ENCODE measurements at regions of chr7 and their contacts with region 1.

Region 1: DNA sequence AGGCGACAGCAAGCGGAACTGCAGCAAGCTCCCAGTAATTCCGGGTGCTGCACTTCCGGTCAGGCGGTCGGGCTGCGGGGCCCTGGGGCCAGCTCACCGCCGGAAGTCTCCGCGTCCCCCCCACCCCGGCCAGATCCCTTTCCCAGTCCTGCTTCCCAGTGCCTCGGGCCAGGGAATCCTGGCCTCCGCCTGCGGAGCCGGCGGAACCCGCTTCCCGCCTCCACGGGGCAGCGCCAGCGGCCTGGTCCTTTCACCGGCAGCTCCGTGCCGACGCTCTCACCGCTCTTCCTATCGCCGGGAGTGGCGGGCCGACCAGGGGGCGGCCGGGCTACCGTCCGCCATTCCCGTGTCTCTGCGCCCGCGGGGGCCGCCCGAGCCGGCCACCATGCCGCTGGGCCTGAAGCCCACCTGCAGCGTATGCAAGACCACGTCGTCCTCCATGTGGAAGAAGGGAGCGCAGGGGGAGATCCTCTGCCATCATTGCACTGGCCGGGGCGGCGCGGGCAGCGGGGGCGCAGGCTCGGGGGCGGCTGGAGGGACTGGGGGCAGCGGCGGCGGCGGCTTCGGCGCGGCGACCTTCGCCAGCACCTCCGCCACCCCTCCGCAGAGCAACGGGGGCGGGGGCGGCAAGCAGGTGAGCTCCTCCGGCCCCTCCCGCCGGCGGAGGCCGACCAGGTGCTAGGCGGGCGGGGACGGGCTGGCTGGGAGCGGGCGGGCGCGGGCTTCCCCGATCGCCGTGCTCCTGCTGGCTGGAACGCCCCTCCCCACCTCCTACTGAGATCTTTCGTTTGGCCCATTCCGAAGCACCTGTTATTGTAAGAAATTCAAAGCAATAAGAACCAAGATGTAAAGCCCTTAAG is at the start of gene GATAD1:
- DNase-seq: peak; percentile 63 to 91 (median 72)
- ATAC-seq: peak; percentile 56
- H3K4me3 ChIP-seq: peak within 1 kb of the TSS; percentile 85
- H3K4me3 Mint-ChIP-seq: peak within 1 kb of the TSS; percentile 96
- H3K27ac ChIP-seq: peak within 1 kb of the TSS; percentile 92 to 93
- H3K27ac Mint-ChIP-seq: peak within 1 kb of the TSS; percentile 94
- H3K4me1 ChIP-seq: peaks cover 13% of the 10 kb centered on the region
- H3K4me1 Mint-ChIP-seq: peaks cover 4% of the 10 kb centered on the region
- H3K27me3 ChIP-seq: no peaks in the 10 kb centered on the region
- H3K27me3 Mint-ChIP-seq: no peaks in the 10 kb centered on the region
- CTCF ChIP-seq: peak; percentile 95
- total RNA-seq, gene GATAD1: 12.0 to 13.5 TPM

Region 2: GRCh38 chr7:91835846-91836368 is 611.7 kb before region 1 on chr7:
- CTCF ChIA-PET with region 1: no interaction called
- POLR2A ChIA-PET with region 1: no interaction called
- intact Hi-C with region 1: loop called (anchors 2 to 10 kb)
- DNase-seq: no peak
- ATAC-seq: no peak
- H3K4me3 ChIP-seq: no peak overlapping the region
- H3K4me3 Mint-ChIP-seq: no peak overlapping the region
- H3K27ac ChIP-seq: no peak overlapping the region
- H3K27ac Mint-ChIP-seq: no peak overlapping the region
- H3K4me1 ChIP-seq: no peaks in the 10 kb centered on the region
- H3K4me1 Mint-ChIP-seq: no peaks in the 10 kb centered on the region
- H3K27me3 ChIP-seq: no peaks in the 10 kb centered on the region
- H3K27me3 Mint-ChIP-seq: no peaks in the 10 kb centered on the region
- CTCF ChIP-seq: no peak

Region 3: GRCh38 chr7:92134271-92135051 is 313.1 kb before region 1 on chr7 and contains the start of gene CYP51A1:
- CTCF ChIA-PET with region 1: interaction called, 6 read pairs
- POLR2A ChIA-PET with region 1: interaction called, 6 read pairs
- intact Hi-C with region 1: loop called (anchors 5 kb)
- DNase-seq: peak; percentile 84 to 96 (median 91)
- ATAC-seq: peak; percentile 82
- H3K4me3 ChIP-seq: peak within 1 kb of the TSS; percentile 92
- H3K4me3 Mint-ChIP-seq: peak within 1 kb of the TSS; percentile 96
- H3K27ac ChIP-seq: peak within 1 kb of the TSS; percentile 84 to 94
- H3K27ac Mint-ChIP-seq: peak within 1 kb of the TSS; percentile 98
- H3K4me1 ChIP-seq: peaks cover 21% of the 10 kb centered on the region
- H3K4me1 Mint-ChIP-seq: peaks cover 40% of the 10 kb centered on the region
- H3K27me3 ChIP-seq: no peaks in the 10 kb centered on the region
- H3K27me3 Mint-ChIP-seq: no peaks in the 10 kb centered on the region
- CTCF ChIP-seq: no peak
- total RNA-seq, gene CYP51A1: 25.9 to 30.9 TPM

Region 4: GRCh38 chr7:92421676-92422435 is 25.7 kb before region 1 on chr7:
- CTCF ChIA-PET with region 1: interaction called, 41 read pairs
- POLR2A ChIA-PET with region 1: interaction called, 50 read pairs
- intact Hi-C with region 1: loop called (anchors 1 kb)
- DNase-seq: no peak
- ATAC-seq: no peak
- H3K4me3 ChIP-seq: no peak overlapping the region
- H3K4me3 Mint-ChIP-seq: no peak overlapping the region
- H3K27ac ChIP-seq: no peak overlapping the region
- H3K27ac Mint-ChIP-seq: no peak overlapping the region
- H3K4me1 ChIP-seq: peaks cover 11% of the 10 kb centered on the region
- H3K4me1 Mint-ChIP-seq: peaks cover 12% of the 10 kb centered on the region
- H3K27me3 ChIP-seq: peaks cover 2 to 11% of the 10 kb centered on the region in 2 experiments
- H3K27me3 Mint-ChIP-seq: peaks cover 12% of the 10 kb centered on the region
- CTCF ChIP-seq: no peak

Region 5: DNA sequence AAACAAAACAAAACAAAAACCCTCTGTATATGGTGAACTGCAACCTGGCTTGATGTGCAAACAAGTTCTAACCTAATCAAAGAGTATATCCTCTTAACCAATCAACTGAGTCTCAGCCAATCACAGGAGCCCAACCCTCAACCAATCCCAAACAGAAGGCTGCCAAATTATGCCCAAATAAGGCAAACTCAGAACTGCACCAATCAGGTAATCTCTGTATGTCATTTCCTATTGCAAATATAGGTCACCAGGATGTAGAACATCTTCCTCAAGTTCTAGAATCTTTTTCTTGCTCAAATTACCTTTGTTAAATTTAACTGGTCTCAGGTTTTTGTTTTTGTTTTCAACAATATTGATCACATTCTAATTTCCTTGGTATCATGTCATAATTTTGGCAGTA is 137.4 kb after region 1 on chr7:
- CTCF ChIA-PET with region 1: interaction called, 3 read pairs
- POLR2A ChIA-PET with region 1: interaction called, 18 read pairs
- intact Hi-C with region 1: loop called in 1 of 2 experiments (anchors 2 kb)
- DNase-seq: peak in 4 of 14 experiments; percentile 6 to 50 (median 46)
- ATAC-seq: peak; percentile 33
- H3K4me3 ChIP-seq: no peak overlapping the region
- H3K4me3 Mint-ChIP-seq: peak overlapping the region; percentile 48
- H3K27ac ChIP-seq: no peak overlapping the region
- H3K27ac Mint-ChIP-seq: peak overlapping the region; percentile 70
- H3K4me1 ChIP-seq: peaks cover 26% of the 10 kb centered on the region
- H3K4me1 Mint-ChIP-seq: peaks cover 71% of the 10 kb centered on the region
- H3K27me3 ChIP-seq: no peaks in the 10 kb centered on the region
- H3K27me3 Mint-ChIP-seq: no peaks in the 10 kb centered on the region
- CTCF ChIP-seq: no peak

Measured in CD4-positive, alpha-beta T cell (primary cell).